ENCODE measurements at regions of chr9 and their contacts with region 1.

Region 1: GRCh38 chr9:124861342-124862229 is at the starts of genes ARPC5L and RPL35:
- DNase-seq: peak; percentile 59
- ATAC-seq: peak; percentile 96
- H3K4me3 ChIP-seq: peak within 1 kb of the TSS; percentile 79 to 90
- H3K27ac ChIP-seq: peak within 1 kb of the TSS; percentile 90
- H3K4me1 ChIP-seq: peaks cover 30% of the 10 kb centered on the region
- H3K27me3 ChIP-seq: no peaks in the 10 kb centered on the region
- CTCF ChIP-seq: no peak; the same call in 1 of the 2 replicates
- total RNA-seq, gene ARPC5L: 39.6 TPM
- total RNA-seq, gene RPL35: 758 TPM

Region 2: GRCh38 chr9:124222918-124223720 is 638.5 kb before region 1 on chr9:
- CTCF ChIA-PET with region 1: no interaction called
- POLR2A ChIA-PET with region 1: no interaction called
- in situ Hi-C with region 1: no loop called
- intact Hi-C with region 1: no loop called
- DNase-seq: no peak
- ATAC-seq: no peak
- H3K4me3 ChIP-seq: no peak overlapping the region
- H3K27ac ChIP-seq: no peak overlapping the region
- H3K4me1 ChIP-seq: peaks cover 9% of the 10 kb centered on the region
- H3K27me3 ChIP-seq: no peaks in the 10 kb centered on the region
- CTCF ChIP-seq: no peak

Region 3: DNA sequence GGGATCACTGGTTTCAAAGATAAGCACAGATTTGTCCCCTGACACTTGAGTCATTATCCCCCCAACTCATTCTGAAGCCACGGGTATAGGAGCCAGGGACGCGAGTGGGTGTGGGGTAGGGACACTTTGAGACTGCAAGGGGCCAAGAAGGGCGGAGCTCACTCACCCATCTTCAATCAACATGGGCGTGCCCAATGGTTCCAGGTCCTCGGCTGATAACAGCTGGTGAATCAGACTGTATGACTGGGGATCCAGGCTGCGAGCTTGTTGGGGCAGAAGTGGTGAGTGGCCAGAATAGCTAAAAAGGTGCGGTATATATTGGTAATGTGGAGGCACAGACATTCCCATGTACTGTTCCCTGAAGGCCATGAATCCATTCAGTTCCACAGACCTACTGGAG is 323.7 kb before region 1 on chr9:
- CTCF ChIA-PET with region 1: no interaction called
- POLR2A ChIA-PET with region 1: no interaction called
- in situ Hi-C with region 1: no loop called
- intact Hi-C with region 1: no loop called
- DNase-seq: no peak
- ATAC-seq: no peak
- H3K4me3 ChIP-seq: no peak overlapping the region
- H3K27ac ChIP-seq: no peak overlapping the region
- H3K4me1 ChIP-seq: no peaks in the 10 kb centered on the region
- H3K27me3 ChIP-seq: no peaks in the 10 kb centered on the region
- CTCF ChIP-seq: no peak

Region 4: DNA sequence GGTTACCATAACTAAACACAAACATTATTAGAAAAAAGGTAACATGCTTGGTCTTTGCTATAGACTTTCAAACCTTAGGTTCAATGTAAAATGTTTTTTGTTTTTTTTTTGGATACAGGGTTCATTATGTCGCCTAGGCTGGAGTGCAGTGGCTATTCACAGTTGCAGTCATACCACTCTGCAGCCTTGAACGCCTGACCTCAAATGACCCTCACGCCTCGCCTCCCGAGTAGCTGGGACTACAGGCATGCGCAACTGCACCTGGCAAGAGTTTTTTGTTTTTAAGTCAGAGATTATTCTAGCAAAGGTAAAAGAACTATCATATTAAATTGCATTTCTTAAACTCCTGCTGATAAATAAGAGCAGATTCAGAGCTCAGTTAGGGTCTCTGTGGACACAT is 299.3 kb before region 1 on chr9:
- CTCF ChIA-PET with region 1: no interaction called
- POLR2A ChIA-PET with region 1: no interaction called
- in situ Hi-C with region 1: no loop called
- intact Hi-C with region 1: no loop called
- DNase-seq: no peak
- ATAC-seq: no peak
- H3K4me3 ChIP-seq: no peak overlapping the region
- H3K27ac ChIP-seq: no peak overlapping the region
- H3K4me1 ChIP-seq: no peaks in the 10 kb centered on the region; the same call in 1 of the 2 replicates
- H3K27me3 ChIP-seq: no peaks in the 10 kb centered on the region
- CTCF ChIP-seq: no peak

Region 5: GRCh38 chr9:124758061-124758460 is 103.5 kb before region 1 on chr9:
- CTCF ChIA-PET with region 1: no interaction called
- POLR2A ChIA-PET with region 1: no interaction called
- in situ Hi-C with region 1: no loop called
- intact Hi-C with region 1: no loop called
- DNase-seq: no peak
- ATAC-seq: no peak
- H3K4me3 ChIP-seq: no peak overlapping the region
- H3K27ac ChIP-seq: peak overlapping the region; percentile 20; the same call in 1 of the 2 replicates
- H3K4me1 ChIP-seq: peaks cover 55% of the 10 kb centered on the region
- H3K27me3 ChIP-seq: no peaks in the 10 kb centered on the region
- CTCF ChIP-seq: no peak

Region 6: GRCh38 chr9:124880501-124880900 is 18.9 kb after region 1 on chr9:
- CTCF ChIA-PET with region 1: interaction called, 3 read pairs
- POLR2A ChIA-PET with region 1: interaction called, 10 read pairs
- in situ Hi-C with region 1: no loop called
- intact Hi-C with region 1: no loop called
- DNase-seq: no peak
- ATAC-seq: no peak
- H3K4me3 ChIP-seq: no peak overlapping the region
- H3K27ac ChIP-seq: no peak overlapping the region
- H3K4me1 ChIP-seq: no peaks in the 10 kb centered on the region
- H3K27me3 ChIP-seq: no peaks in the 10 kb centered on the region
- CTCF ChIP-seq: no peak

Region 7: DNA sequence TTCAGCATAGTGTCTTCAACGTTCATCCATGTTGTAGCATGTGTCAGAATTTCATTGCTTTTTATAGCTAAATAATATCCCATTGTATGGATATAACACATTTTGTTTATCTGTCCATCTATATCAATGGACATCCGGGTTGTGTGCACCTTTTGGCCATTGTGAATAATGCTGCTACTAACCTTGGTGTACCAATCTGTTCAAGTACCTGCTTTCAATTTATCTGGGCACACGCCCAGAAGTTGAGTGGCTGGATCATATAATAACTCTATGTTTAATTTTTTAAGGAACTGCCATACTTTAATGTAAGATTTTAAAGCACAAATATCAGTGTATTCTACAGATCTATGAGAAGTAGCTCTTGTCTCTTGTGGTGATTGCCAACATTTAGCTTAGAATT is 238.2 kb after region 1 on chr9:
- CTCF ChIA-PET with region 1: no interaction called
- POLR2A ChIA-PET with region 1: interaction called, 15 read pairs
- in situ Hi-C with region 1: no loop called
- intact Hi-C with region 1: no loop called
- DNase-seq: no peak
- ATAC-seq: no peak
- H3K4me3 ChIP-seq: no peak overlapping the region
- H3K27ac ChIP-seq: no peak overlapping the region
- H3K4me1 ChIP-seq: no peaks in the 10 kb centered on the region
- H3K27me3 ChIP-seq: no peaks in the 10 kb centered on the region
- CTCF ChIP-seq: no peak

Measured in Panc1 (cell line).